GM23248 (cell line): ENCODE measurements at regions of chr5 and their contacts with region 1.

Region 1: GRCh38 chr5:3602785-3603502 is 7.3 kb downstream of the IRX1 start:
- DNase-seq: peak; percentile 91
- H3K4me3 ChIP-seq: peak overlapping the region; percentile 84
- H3K27ac ChIP-seq: peak overlapping the region; percentile 78
- H3K4me1 ChIP-seq: peaks cover 40% of the 10 kb centered on the region
- H3K27me3 ChIP-seq: no peaks in the 10 kb centered on the region

Region 2: DNA sequence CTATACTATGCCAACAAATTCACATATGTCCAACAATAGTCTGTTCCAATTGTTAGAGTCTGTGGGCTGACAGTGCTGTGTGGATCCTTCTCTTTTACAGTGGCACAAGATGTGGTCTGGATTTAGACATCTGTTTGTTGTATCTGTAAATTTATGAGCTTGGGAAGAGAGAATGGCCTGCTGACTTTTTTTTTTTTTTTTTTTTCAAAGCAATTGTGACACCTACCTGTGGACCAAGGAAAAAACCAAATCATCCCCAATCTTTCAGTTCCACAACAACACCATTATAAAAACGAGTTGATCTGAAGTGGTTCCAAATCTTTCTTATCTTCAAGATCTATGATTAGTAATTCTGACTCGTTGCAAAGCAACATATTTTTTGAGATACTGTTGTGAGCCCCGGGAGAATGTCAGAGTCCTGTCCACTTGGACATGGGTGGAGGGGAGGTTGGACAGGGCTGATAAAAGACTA is 856.3 kb before region 1 on chr5:
- in situ Hi-C with region 1: loop called (anchors 5 kb)
- DNase-seq: peak; percentile 77
- H3K4me3 ChIP-seq: peak overlapping the region; percentile 99
- H3K27ac ChIP-seq: peak overlapping the region; percentile 84
- H3K4me1 ChIP-seq: peaks cover 54% of the 10 kb centered on the region
- H3K27me3 ChIP-seq: no peaks in the 10 kb centered on the region

Region 3: GRCh38 chr5:3277590-3278196 is 325.3 kb before region 1 on chr5:
- in situ Hi-C with region 1: no loop called
- DNase-seq: no peak
- H3K4me3 ChIP-seq: no peak overlapping the region
- H3K27ac ChIP-seq: no peak overlapping the region
- H3K4me1 ChIP-seq: no peaks in the 10 kb centered on the region
- H3K27me3 ChIP-seq: no peaks in the 10 kb centered on the region